Activated naive CD8-positive, alpha-beta T cell treated with anti-CD3 and anti-CD28 coated beads, Interleukin-2, amount 10 ng/mL, durations not matched to agents 7 days and 5 days (primary cell): ENCODE measurements at regions of chr11 and their contacts with region 1.

Region 1: GRCh38 chr11:65117216-65118096 is at the start of gene ZNHIT2:
- DNase-seq: peak; percentile 98
- ATAC-seq: peak; percentile 58
- H3K4me3 Mint-ChIP-seq: peak within 1 kb of the TSS; percentile 88
- H3K27ac Mint-ChIP-seq: peak within 1 kb of the TSS; percentile 93
- H3K4me1 Mint-ChIP-seq: peaks cover 38% of the 10 kb centered on the region
- H3K27me3 Mint-ChIP-seq: no peaks in the 10 kb centered on the region
- total RNA-seq, gene ZNHIT2: 11.1 to 11.9 TPM

Region 2: DNA sequence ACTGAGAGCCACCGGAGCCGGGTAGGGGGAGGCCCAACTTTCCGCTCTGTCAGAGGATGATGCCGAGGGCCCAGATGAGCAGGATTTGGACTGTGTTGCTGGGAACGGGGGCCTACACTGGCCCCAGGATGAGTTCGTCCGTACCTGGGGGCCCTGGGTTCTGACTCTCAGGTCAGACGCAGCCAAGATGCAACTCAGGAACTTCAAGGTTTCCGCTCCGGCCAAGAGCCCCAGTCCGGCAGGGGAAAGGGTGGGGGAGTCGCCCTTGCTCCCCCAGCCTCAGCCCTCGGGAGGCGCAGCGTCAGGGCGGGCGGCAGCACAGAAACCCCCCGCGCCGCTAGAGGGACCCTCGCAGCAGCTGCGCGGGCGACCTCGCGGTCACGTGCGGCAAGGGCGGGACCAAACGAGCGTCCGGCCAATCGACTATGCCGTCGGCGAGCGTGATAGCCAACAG is 103.7 kb before region 1 on chr11:
- POLR2A ChIA-PET with region 1: interaction called, 16 read pairs
- DNase-seq: peak; percentile 90
- ATAC-seq: peak; percentile 86
- H3K4me3 Mint-ChIP-seq: peak overlapping the region; percentile 91
- H3K27ac Mint-ChIP-seq: peak overlapping the region; percentile 98
- H3K4me1 Mint-ChIP-seq: peaks cover 20% of the 10 kb centered on the region
- H3K27me3 Mint-ChIP-seq: no peaks in the 10 kb centered on the region

Region 3: DNA sequence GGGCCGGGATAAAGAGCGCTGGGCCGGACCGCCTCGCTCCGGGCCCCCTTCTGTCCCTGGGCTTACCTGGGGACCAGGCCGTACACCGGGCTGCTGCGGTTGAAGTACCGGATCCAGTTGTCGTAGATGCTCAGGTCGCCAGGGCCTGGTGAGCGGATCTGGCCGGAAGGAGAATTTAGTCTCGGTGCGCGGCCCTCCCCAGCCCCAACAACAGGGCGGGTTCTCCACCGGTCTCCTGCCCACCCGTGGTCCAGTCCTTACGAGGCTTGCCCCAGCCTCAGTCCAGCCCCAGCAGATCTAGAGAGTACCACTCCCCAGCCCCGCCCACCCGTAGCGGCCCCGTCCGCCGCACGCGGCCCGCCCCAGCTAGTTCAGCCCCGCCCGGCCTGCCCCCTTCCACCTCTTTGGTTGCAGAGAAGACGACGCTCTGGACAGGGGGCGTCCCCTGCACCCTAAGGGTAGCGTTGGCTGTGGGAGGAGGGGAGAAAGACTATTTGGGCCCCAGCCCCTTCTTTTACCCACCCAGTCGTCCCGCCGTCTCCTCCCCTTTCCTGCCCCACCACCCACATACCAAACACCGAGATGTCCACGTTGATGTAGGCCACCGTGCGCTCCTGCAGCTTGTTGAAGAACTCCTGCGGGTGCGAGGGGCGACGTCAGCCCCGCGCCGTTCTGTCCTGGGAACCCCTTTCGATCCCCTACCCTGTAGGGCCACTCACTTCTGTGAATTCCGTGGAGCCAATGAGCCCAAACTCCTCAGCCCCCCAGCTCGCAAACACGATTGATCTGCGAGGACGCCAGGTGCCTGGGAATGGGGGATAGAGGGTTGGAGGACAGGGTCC is 69.7 kb before region 1 on chr11:
- POLR2A ChIA-PET with region 1: no interaction called
- DNase-seq: peak; percentile 51
- ATAC-seq: peak; percentile 65
- H3K4me3 Mint-ChIP-seq: peak overlapping the region; percentile 73
- H3K27ac Mint-ChIP-seq: peak overlapping the region; percentile 85
- H3K4me1 Mint-ChIP-seq: peaks cover 24% of the 10 kb centered on the region
- H3K27me3 Mint-ChIP-seq: no peaks in the 10 kb centered on the region

Region 4: DNA sequence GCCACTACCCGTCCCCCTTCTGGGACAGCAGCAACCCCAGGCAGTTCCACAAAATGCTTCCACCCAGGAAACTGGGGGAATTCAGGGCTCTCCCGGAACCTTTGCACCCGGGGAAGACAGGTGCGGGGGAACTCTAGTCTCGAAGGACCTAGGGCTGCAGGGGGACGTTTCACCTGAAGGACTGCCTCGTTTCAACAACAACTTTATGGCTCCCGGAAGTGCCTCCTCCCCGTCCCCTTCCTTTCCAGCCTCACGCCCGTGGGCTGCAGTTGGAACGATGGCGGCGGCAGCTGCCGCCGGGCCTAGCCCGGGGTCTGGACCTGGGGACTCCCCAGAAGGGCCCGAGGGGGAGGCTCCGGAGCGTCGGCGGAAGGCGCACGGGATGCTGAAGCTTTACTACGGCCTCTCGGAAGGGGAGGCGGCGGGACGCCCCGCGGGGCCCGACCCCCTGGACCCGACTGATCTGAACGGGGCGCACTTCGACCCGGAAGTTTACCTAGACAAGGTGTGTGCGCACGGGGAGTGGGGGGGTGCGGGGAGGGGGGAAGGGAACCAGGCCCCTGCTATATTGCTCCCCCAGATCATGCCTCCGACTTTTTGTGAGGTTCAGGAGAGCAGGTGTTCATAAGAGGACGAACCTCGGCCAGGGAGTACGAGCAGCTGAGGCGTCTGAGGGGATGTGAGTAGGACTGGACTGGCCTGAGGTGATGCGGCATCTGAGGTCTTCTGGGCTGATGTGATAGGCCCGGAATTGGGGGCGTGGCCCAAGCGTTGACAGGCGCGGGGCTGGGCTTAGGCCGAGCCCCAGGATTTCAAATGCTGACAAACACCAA is 21.3 kb before region 1 on chr11 and contains the start of gene VPS51:
- POLR2A ChIA-PET with region 1: interaction called, 35 read pairs
- DNase-seq: peak; percentile 87
- ATAC-seq: peak; percentile 97
- H3K4me3 Mint-ChIP-seq: peak within 1 kb of the TSS; percentile 91
- H3K27ac Mint-ChIP-seq: peak within 1 kb of the TSS; percentile 97
- H3K4me1 Mint-ChIP-seq: peaks cover 10% of the 10 kb centered on the region
- H3K27me3 Mint-ChIP-seq: no peaks in the 10 kb centered on the region
- total RNA-seq, gene VPS51: 130 to 138 TPM

Region 5: GRCh38 chr11:65134386-65135253 is 17.2 kb after region 1 on chr11 and contains the start of gene SYVN1:
- POLR2A ChIA-PET with region 1: interaction called, 62 read pairs
- DNase-seq: peak; percentile 93
- ATAC-seq: peak; percentile 91
- H3K4me3 Mint-ChIP-seq: peak within 1 kb of the TSS; percentile 99
- H3K27ac Mint-ChIP-seq: peak within 1 kb of the TSS; percentile 100
- H3K4me1 Mint-ChIP-seq: peaks cover 29% of the 10 kb centered on the region
- H3K27me3 Mint-ChIP-seq: no peaks in the 10 kb centered on the region
- total RNA-seq, gene SYVN1: 43.4 to 45.1 TPM

Region 6: GRCh38 chr11:65180877-65181568 is 63.6 kb after region 1 on chr11:
- POLR2A ChIA-PET with region 1: interaction called, 30 read pairs
- DNase-seq: peak; percentile 77
- ATAC-seq: peak; percentile 63
- H3K4me3 Mint-ChIP-seq: peak overlapping the region; percentile 89
- H3K27ac Mint-ChIP-seq: peak overlapping the region; percentile 77
- H3K4me1 Mint-ChIP-seq: peaks cover 17% of the 10 kb centered on the region
- H3K27me3 Mint-ChIP-seq: peaks cover 4% of the 10 kb centered on the region